HEK293 (cell line): ENCODE measurements at regions of chr16 and their contacts with region 1.

Region 1: DNA sequence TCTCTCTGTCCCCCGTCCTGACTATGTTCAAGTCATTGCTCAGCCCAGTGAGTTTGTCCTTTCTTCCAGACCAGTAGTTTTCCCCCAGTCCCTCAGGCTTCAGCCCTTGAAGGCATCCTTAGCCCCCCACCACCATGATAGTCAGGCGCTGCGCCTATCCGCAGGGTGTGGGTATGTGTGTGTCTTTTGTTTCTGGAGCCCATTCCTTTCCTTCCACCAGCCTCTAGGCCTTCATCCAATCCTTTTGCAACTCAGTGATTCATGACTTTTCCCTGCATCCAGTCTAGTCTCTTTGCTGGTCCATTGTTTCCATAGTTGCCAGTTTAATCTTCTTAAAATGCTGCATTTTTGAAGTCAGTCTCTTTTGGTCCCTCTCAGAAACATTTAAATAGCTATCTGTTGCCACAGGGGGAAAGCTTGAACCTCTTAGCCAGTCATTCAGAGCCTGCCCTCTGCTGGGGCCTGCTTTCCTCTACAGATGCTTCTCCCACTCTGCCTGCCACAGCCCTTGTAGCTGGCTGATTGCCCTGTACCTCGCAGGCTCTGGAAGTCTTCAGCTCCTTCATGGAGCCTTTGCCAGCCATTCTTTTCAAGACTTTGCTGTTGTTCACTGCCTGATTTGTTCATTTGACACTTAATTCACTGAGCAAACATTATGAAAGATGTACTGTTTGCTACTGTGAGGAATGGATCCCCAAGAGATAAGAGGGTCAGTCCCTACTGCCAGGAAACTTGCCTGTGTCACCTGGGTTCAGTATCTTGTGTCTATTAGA is 55.9 kb upstream of the ADCY7 start:
- H3K4me3 ChIP-seq: no peak overlapping the region
- H3K27ac ChIP-seq: no peak overlapping the region
- H3K4me1 ChIP-seq: peaks cover 19% of the 10 kb centered on the region
- CTCF ChIP-seq: peak; percentile 83

Region 2: DNA sequence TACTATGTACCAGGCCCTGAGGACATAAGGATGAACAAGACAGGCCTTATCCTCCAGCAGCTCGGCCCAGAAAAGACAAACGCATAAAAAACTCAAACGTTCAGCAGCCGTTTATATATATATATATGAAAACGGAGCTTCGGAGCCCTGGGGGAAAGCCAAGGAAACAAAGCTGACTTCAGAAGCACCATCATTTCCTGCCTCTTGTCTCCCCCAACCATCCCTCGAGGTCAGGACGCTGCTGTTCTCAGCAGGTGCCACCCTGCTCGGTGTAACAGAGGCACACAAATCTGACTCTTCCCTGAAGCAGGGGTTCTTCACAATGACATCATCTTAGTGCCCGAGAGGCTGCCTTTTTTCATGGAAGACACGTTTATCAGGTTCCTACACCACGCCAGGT is 501.4 kb before region 1 on chr16:
- CTCF ChIA-PET with region 1: no interaction called
- POLR2A ChIA-PET with region 1: no interaction called
- H3K4me3 ChIP-seq: no peak overlapping the region
- H3K27ac ChIP-seq: no peak overlapping the region
- H3K4me1 ChIP-seq: no peaks in the 10 kb centered on the region
- CTCF ChIP-seq: no peak

Region 3: GRCh38 chr16:49884033-49885015 is 326.1 kb before region 1 on chr16:
- CTCF ChIA-PET with region 1: no interaction called
- POLR2A ChIA-PET with region 1: no interaction called
- H3K4me3 ChIP-seq: no peak overlapping the region
- H3K27ac ChIP-seq: no peak overlapping the region
- H3K4me1 ChIP-seq: no peaks in the 10 kb centered on the region
- CTCF ChIP-seq: no peak

Region 4: DNA sequence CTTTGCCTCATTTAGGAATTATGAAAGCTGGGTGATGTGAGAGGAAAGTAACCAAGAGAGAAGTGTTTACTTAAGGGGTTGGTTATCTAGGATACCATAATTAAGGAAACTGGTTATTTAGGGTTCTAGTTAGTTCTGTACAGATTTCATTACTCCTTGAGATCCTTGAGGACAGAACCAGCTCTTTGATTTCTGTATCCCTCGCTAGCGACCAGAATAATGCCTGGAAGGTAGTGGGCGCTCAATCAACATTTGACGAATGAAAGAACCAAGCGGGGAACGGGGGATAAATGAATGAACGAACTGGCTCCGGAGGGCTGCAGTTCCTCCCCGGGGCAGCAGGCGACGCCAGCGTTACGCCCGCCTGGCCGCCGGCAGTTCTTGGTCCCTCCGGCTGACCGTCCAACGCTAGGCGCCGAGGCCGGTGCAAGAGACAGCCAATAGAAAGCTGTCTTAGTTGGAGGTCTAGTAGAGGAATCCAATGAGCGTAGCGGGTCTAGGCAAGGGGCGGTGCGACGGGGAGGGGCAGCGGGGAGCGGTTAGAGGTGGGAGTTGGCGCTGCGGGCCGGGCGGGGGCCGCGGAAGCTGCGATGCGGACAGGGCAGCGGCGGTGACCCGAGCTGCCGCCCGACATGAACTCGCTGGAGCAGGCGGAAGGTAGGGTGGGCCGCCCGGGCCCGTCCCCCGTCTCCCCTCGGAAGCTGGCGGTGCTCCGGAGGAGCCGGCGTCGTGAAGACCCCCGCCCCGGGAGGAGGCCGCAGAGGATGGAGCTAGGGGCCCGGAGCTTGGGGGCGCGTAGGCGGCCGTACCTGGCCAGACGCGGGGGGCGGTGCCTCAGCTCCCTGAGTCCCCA is 185.5 kb before region 1 on chr16 and contains the start of gene CNEP1R1:
- CTCF ChIA-PET with region 1: interaction called, 44 read pairs
- POLR2A ChIA-PET with region 1: interaction called, 8 read pairs
- H3K4me3 ChIP-seq: peak within 1 kb of the TSS; percentile 84
- H3K27ac ChIP-seq: peak within 1 kb of the TSS; percentile 54; the same call in 1 of the 2 replicates
- H3K4me1 ChIP-seq: peaks cover 4% of the 10 kb centered on the region; the same call in 1 of the 2 replicates
- CTCF ChIP-seq: peak; percentile 100

Region 5: DNA sequence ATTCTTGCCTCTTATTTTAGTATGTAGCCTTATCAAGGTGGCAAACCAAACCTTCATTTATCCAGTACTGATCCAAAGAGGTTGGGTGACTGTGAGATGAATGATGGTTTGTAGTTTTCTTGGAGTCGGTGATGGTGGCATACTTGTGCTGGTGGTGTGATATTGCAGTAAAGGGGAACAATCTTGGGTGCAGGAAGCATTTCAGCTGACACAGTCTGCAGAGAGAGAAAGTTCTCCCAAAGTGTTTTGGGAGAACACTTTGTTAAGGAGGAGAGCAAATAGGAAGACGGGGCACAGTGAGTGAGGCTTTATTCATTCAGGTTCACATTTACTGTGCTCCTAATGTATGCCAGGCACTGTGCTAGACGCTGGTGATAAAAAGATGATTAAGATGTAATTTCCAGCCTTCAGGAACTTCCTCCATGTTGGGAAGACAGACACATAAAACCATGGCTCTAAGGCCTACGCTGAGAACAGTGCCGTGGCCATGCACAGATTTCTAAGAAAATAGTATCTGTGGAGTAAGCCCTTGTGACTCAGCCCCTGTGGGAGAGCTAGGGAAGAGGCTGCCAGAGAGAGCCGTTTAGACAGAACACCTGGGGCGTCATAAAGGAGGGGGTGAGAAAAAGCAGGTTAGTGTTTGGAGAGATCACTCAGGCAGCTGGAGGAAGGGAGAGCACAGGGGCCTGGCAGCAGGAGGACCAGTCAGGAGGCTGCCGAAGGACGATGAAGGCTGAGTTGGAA is 130.9 kb before region 1 on chr16:
- CTCF ChIA-PET with region 1: interaction called, 11 read pairs
- POLR2A ChIA-PET with region 1: no interaction called
- H3K4me3 ChIP-seq: no peak overlapping the region
- H3K27ac ChIP-seq: no peak overlapping the region
- H3K4me1 ChIP-seq: no peaks in the 10 kb centered on the region
- CTCF ChIP-seq: no peak

Region 6: DNA sequence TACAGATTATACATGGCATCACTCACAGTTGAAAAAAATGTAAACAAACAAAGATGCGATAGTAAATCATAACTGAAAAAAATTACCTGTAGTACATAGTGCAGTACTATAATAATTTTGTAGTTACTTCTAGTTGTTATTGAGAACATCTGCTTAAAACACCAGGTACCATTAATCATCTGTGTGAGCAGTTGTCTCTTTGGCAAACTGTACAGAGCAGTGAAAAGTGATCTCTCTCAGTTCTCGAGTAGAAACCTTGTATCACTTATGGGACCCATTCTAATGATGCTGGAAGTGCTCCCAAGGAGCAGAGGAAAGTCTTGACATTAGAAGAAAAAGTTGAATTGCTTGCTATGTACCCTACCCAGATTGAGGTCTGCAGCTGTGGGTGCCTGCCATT is 66.2 kb before region 1 on chr16:
- CTCF ChIA-PET with region 1: interaction called, 11 read pairs
- POLR2A ChIA-PET with region 1: no interaction called
- H3K4me3 ChIP-seq: no peak overlapping the region
- H3K27ac ChIP-seq: no peak overlapping the region
- H3K4me1 ChIP-seq: 0 out of 2 replicates have a peak, but pooled peaks cover 4% of the 10 kb centered on the region
- CTCF ChIP-seq: no peak

Region 7: DNA sequence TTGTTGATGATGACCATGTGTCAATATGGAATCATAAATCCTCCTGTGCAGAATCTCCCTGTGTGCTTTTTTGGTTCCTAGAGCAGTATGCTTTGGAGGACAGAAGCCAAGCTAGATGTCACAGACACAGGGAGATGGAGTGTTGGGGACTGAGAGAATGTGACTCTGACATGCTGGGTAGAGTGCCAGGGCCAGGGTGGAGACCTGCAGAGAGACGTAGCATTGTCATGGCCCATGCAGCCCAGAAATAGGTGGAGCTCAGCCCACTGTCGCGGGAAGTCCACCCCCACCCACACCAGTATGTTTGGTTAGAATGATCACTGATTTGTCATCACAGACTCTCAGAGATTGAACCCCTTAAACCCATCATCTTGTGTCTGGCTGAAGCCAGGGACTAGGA is 16.7 kb after region 1 on chr16:
- CTCF ChIA-PET with region 1: interaction called, 20 read pairs
- POLR2A ChIA-PET with region 1: no interaction called
- H3K4me3 ChIP-seq: no peak overlapping the region
- H3K27ac ChIP-seq: no peak overlapping the region
- H3K4me1 ChIP-seq: no peaks in the 10 kb centered on the region
- CTCF ChIP-seq: no peak